ENCODE measurements at regions of chr5 and their contacts with region 1.

Region 1: GRCh38 chr5:62354028-62354874 is 48.2 kb downstream of the KIF2A start:
- DNase-seq: peak in 4 of 7 donors; percentile 29 to 60 (median 37)
- H3K4me3 ChIP-seq: no peak overlapping the region
- H3K27ac ChIP-seq: no peak overlapping the region
- H3K4me1 ChIP-seq: no peaks in the 10 kb centered on the region
- H3K27me3 ChIP-seq: no peaks in the 10 kb centered on the region
- CTCF ChIP-seq: peak; percentile 42 to 82 (median 70)
- POLR2A ChIP-seq: no peak

Region 2: GRCh38 chr5:62231576-62231975 is 122.7 kb before region 1 on chr5:
- intact Hi-C with region 1: loop called (anchors 10 kb)
- DNase-seq: no peak
- H3K4me3 ChIP-seq: no peak overlapping the region
- H3K27ac ChIP-seq: no peak overlapping the region
- H3K4me1 ChIP-seq: peaks cover 4 to 7% of the 10 kb centered on the region in 2 donors
- H3K27me3 ChIP-seq: no peaks in the 10 kb centered on the region
- CTCF ChIP-seq: no peak
- POLR2A ChIP-seq: no peak

Region 3: DNA sequence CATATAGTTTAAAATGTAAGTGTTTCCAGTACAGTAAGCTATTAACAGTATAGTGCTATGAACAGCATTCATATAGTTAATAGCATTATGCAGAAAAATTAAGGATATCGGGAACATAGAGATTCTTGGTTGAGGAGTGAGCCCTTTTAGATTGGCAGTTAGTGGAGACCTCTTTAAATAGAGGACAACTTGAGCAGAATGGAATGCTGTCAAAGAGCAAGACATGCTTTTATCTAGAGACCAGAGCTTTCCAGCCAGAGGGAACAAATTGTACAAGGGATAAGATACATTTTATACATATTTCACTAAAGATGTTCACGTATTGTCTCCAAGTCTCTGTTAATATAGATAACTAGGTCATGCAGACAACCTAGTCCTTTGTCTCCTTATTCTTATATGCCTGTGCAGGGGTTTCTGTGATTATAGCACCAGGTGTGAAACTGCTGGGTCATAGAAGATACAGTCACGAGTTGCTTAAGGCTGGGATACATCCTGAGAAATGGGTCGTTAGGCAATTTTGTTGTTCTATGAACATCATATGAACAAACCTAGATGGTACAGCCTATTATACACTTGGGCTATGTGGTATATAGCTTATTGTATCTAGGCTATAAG is 64.3 kb after region 1 on chr5:
- intact Hi-C with region 1: no loop called
- DNase-seq: no peak
- H3K4me3 ChIP-seq: no peak overlapping the region
- H3K27ac ChIP-seq: no peak overlapping the region
- H3K4me1 ChIP-seq: peaks cover 0 to 6% of the 10 kb centered on the region in 2 donors
- H3K27me3 ChIP-seq: no peaks in the 10 kb centered on the region
- CTCF ChIP-seq: no peak
- POLR2A ChIP-seq: no peak